GM12878 (cell line): ENCODE measurements at regions of chr5 and their contacts with region 1.

Region 1: DNA sequence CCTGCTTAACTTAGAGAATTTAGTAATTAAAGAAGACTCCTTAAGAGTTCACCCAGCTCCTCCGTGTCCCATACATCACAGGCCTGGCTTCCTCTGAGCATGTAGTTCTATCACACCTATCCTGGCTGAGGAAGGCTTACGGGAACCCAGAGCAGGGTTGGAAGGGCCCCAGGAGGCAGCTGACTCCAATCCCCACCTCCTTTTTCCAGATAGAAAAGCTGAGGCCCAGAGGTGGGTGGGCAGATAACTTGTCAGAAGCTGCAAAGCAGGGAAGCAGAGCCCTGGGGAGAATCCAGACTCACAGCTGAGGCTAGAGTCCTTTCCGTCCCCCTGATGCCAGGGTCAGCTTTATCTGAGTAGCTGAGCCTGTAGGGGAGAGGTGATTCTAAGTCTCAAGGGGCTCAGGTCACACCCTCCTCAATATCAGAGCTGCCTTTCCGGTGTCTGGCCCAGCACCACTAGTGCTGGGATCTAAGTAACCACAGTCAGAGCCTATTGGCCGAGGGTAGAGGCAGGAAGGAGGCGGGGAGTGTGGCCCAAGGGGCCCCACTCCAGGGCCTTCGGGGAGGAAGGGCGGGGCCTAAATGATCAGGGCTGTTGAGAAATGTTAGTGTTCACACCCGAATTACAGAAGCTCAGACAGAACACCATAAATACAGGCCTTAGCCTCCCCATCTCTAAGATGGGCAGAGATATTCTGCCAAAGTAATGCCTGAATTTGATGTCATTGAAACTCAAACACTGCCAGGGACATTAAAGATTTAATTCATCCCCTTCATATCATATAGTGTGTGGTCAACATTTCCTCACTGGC is 9.9 kb downstream of the CCDC69 start:
- DNase-seq: peak; percentile 93
- ATAC-seq: peak; percentile 83
- H3K4me3 ChIP-seq: peak overlapping the region; percentile 74
- H3K27ac ChIP-seq: peak overlapping the region; percentile 99
- H3K4me1 ChIP-seq: peaks cover 57% of the 10 kb centered on the region
- H3K27me3 ChIP-seq: no peaks in the 10 kb centered on the region
- CTCF ChIP-seq: no peak
- EP300 ChIP-seq: peak in 1 of 2 experiments; percentile 64; a peak in 1 of 4 replicates
- POLR2A ChIP-seq: peak; percentile 93
- RAD21 ChIP-seq: no peak

Region 2: DNA sequence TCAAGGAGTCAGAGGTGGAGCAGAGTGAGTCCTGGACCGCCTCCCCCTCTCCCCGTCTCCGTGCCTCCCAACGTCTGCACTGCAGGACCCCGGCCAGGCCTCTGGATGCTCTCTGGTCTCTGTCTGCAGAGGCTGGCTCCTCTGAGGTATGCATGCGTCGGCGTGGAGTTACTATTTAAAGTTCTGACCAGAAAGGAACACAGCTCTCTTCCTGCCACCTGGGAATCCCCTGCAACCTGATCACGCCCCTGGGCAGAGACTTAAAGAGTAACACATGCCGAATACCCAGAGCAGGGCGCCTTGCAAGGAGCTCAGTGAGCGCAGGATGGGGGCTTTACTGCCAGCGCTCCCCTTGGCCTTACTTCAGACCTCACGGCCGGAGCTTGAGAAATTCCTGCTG is 72.5 kb before region 1 on chr5:
- CTCF ChIA-PET with region 1: interaction called, 6 read pairs
- POLR2A ChIA-PET with region 1: interaction called, 41 read pairs
- RAD21 ChIA-PET with region 1: interaction called, 10 read pairs
- SMC1A ChIA-PET with region 1: interaction called, 12 read pairs
- in situ Hi-C with region 1: no loop called
- intact Hi-C with region 1: no loop called
- DNase-seq: no peak
- ATAC-seq: peak; percentile 90
- H3K4me3 ChIP-seq: peak overlapping the region; percentile 52
- H3K27ac ChIP-seq: peak overlapping the region; percentile 61
- H3K4me1 ChIP-seq: peaks cover 60% of the 10 kb centered on the region
- H3K27me3 ChIP-seq: no peaks in the 10 kb centered on the region
- CTCF ChIP-seq: no peak
- EP300 ChIP-seq: no peak
- POLR2A ChIP-seq: peak; percentile 67
- RAD21 ChIP-seq: 0 out of 2 replicates have a peak, but pooled peaks have one; percentile 13

Region 3: GRCh38 chr5:151157426-151158286 is 56.4 kb before region 1 on chr5 and contains the start of gene ANXA6:
- CTCF ChIA-PET with region 1: interaction called, 3 read pairs
- POLR2A ChIA-PET with region 1: interaction called, 21 read pairs
- RAD21 ChIA-PET with region 1: interaction called, 24 read pairs
- SMC1A ChIA-PET with region 1: interaction called, 78 read pairs
- in situ Hi-C with region 1: no loop called
- intact Hi-C with region 1: loop called (anchors 2 kb)
- DNase-seq: no peak
- ATAC-seq: peak; percentile 77
- H3K4me3 ChIP-seq: peak within 1 kb of the TSS; percentile 97
- H3K27ac ChIP-seq: peak within 1 kb of the TSS; percentile 89
- H3K4me1 ChIP-seq: peaks cover 26% of the 10 kb centered on the region
- H3K27me3 ChIP-seq: no peaks in the 10 kb centered on the region
- CTCF ChIP-seq: no peak
- EP300 ChIP-seq: no peak
- POLR2A ChIP-seq: peak; percentile 81
- RAD21 ChIP-seq: no peak
- polyA plus RNA-seq, gene ANXA6: 44.0 to 73.1 TPM

Region 4: GRCh38 chr5:151196556-151197290 is 17.3 kb before region 1 on chr5:
- CTCF ChIA-PET with region 1: interaction called, 19 read pairs
- POLR2A ChIA-PET with region 1: interaction called, 20 read pairs
- RAD21 ChIA-PET with region 1: interaction called, 24 read pairs
- SMC1A ChIA-PET with region 1: interaction called, 18 read pairs
- in situ Hi-C with region 1: no loop called
- intact Hi-C with region 1: loop called (anchors 2 kb)
- DNase-seq: peak; percentile 95
- ATAC-seq: peak; percentile 98
- H3K4me3 ChIP-seq: no peak overlapping the region
- H3K27ac ChIP-seq: peak overlapping the region; percentile 20; the same call in 1 of the 2 replicates
- H3K4me1 ChIP-seq: peaks cover 17% of the 10 kb centered on the region
- H3K27me3 ChIP-seq: no peaks in the 10 kb centered on the region
- CTCF ChIP-seq: no peak
- EP300 ChIP-seq: peak; percentile 60 to 69; a peak in 2 of 4 replicates
- POLR2A ChIP-seq: no peak
- RAD21 ChIP-seq: no peak

Region 5: DNA sequence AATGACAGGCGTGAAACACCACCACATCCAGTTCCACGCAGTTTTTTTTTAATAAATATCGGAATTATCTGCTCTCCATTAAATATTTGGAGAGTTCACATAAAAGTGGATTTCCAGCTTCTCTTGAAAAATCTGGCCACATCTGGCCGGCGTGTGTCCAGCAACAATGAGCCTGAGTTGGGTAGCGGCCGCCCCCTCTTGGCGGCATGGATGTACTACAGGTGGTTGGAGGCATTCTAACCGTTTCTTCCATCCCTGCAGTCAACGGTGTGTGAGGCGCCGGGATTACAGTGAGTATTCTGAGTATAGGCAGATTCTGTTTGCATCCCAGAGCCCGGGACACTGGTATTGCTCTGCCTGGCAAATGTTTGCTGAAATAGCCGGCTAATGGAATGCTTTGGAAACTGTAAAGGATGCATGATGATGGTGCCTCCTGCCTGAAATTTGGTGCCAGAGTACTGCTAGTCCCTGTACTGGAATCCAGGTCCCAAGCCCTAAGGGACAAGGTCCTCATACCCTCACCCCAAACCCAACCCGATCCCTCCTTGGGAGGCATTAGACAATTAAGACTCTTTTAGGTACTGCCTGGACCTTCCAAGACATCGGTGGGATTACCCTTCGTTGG is 25.3 kb after region 1 on chr5:
- CTCF ChIA-PET with region 1: interaction called, 293 read pairs
- POLR2A ChIA-PET with region 1: interaction called, 290 read pairs
- RAD21 ChIA-PET with region 1: interaction called, 105 read pairs
- SMC1A ChIA-PET with region 1: interaction called, 325 read pairs
- in situ Hi-C with region 1: no loop called
- intact Hi-C with region 1: no loop called
- DNase-seq: no peak
- ATAC-seq: peak; percentile 61
- H3K4me3 ChIP-seq: no peak overlapping the region; the same call in 1 of the 2 replicates
- H3K27ac ChIP-seq: no peak overlapping the region
- H3K4me1 ChIP-seq: peaks cover 70% of the 10 kb centered on the region
- H3K27me3 ChIP-seq: no peaks in the 10 kb centered on the region
- CTCF ChIP-seq: peak; percentile 66 to 72 (median 72)
- EP300 ChIP-seq: no peak
- POLR2A ChIP-seq: no peak
- RAD21 ChIP-seq: peak; percentile 82

Region 6: DNA sequence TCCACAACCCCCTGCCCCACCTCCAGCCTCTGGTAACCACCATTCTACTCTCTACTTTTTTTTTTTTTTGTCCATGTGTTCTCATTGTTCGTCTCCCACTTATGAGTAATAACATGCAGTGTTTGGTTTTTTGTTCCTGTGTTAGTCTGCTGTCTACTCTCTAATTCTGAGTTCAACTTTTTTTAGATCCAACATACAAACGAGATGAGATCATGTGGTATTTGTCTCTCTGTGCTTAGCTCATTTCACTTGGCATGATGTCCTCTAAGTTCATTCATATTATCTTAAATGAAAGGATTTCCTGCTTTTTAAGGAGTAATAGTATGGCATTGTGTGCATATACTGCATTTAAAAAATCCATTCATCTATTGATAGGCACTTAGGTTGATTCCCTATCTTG is 1060.2 kb after region 1 on chr5:
- CTCF ChIA-PET with region 1: no interaction called
- POLR2A ChIA-PET with region 1: no interaction called
- RAD21 ChIA-PET with region 1: no interaction called
- SMC1A ChIA-PET with region 1: no interaction called
- in situ Hi-C with region 1: no loop called
- intact Hi-C with region 1: no loop called
- DNase-seq: no peak
- ATAC-seq: no peak
- H3K4me3 ChIP-seq: no peak overlapping the region
- H3K27ac ChIP-seq: no peak overlapping the region
- H3K4me1 ChIP-seq: no peaks in the 10 kb centered on the region
- H3K27me3 ChIP-seq: no peaks in the 10 kb centered on the region
- CTCF ChIP-seq: no peak
- EP300 ChIP-seq: no peak
- POLR2A ChIP-seq: no peak
- RAD21 ChIP-seq: no peak